Caco-2 (cell line): ENCODE measurements at regions of chr20 and their contacts with region 1.

Region 1: DNA sequence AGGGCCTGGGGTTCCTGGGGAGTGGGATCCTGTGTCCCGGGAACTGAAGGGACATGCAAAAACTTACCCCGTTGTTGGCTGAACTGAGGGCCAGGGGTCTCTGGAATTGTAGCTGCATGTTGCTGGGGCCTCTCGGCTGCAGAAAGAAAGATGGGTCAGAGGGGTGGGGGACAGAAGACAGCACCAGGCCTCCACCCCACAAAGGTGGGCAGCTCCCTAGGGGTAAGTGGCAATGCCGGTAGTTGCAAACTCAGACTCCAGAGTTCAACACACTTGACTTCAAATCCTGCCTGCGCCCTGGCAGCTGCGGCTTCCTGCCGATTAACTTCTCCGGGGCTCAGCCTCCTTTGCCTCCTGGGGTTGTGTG is 4.8 kb downstream of the ZBP1 start:
- DNase-seq: no peak
- H3K4me3 ChIP-seq: no peak overlapping the region
- H3K4me3 Mint-ChIP-seq: no peak overlapping the region
- H3K27ac Mint-ChIP-seq: no peak overlapping the region
- H3K4me1 ChIP-seq: no peaks in the 10 kb centered on the region
- H3K4me1 Mint-ChIP-seq: no peaks in the 10 kb centered on the region
- H3K27me3 ChIP-seq: no peaks in the 10 kb centered on the region; the same call in 1 of the 2 replicates
- H3K27me3 Mint-ChIP-seq: peaks cover 27% of the 10 kb centered on the region
- CTCF ChIP-seq: no peak

Region 2: GRCh38 chr20:58160451-58161061 is 545.1 kb after region 1 on chr20:
- CTCF ChIA-PET with region 1: no interaction called
- POLR2A ChIA-PET with region 1: interaction called, 22 read pairs
- intact Hi-C with region 1: no loop called
- DNase-seq: no peak
- H3K4me3 ChIP-seq: no peak overlapping the region
- H3K4me3 Mint-ChIP-seq: no peak overlapping the region
- H3K27ac Mint-ChIP-seq: no peak overlapping the region
- H3K4me1 ChIP-seq: no peaks in the 10 kb centered on the region
- H3K4me1 Mint-ChIP-seq: no peaks in the 10 kb centered on the region
- H3K27me3 ChIP-seq: peaks cover 1% of the 10 kb centered on the region; the same call in 1 of the 2 replicates
- H3K27me3 Mint-ChIP-seq: peaks cover 41% of the 10 kb centered on the region
- CTCF ChIP-seq: no peak